B cell (primary cell): ENCODE measurements at regions of chr1 and their contacts with region 1.

Region 1: DNA sequence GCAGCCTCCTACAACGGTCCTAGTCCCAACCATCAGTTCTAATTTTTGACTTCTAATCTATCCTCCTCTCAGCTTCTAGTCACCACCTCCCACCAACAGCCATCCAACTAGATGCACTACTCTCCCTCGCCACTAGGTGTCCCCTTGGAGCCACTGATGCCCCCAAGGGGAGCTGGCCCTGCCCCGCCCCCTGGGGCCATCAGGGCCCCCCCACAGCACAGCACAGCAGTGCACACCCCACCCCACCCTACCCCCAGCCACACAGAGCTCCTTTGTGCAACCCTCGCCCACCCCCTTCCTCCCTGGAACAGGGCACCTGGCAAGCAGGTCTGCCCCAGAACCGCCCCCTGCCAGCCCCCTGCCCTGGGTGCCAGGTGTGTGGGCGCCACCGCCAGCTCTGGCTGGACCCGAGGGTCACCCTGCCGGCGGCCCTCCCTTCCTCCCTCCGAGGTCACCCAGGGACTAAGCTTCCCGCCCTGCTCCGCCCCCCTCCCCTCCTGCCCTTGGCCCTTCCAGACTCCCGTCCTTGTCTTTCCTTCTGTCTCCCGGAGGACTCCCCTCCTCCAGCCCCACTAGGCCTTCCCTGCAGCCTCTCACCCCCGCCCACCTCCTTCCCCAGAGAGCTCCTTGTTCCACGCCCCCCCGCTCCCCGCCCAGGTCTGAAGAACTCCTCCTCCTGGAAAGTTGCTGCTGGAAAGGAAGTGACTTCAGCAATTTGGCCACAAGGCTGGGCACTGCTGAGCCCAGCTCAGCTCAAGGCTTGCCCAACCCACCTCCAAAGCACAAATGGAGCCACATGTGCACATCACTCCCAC is 47.0 kb downstream of the AHDC1 start:
- DNase-seq: peak; percentile 81
- ATAC-seq: peak; percentile 89
- H3K4me3 ChIP-seq: no peak overlapping the region
- H3K4me3 Mint-ChIP-seq: peak overlapping the region; percentile 39
- H3K27ac ChIP-seq: peak overlapping the region in 1 of 2 donors; percentile 22
- H3K27ac Mint-ChIP-seq: peak overlapping the region; percentile 83
- H3K4me1 ChIP-seq: peaks cover 23 to 33% of the 10 kb centered on the region in 2 donors
- H3K4me1 Mint-ChIP-seq: peaks cover 44% of the 10 kb centered on the region
- H3K27me3 ChIP-seq: no peaks in the 10 kb centered on the region
- H3K27me3 Mint-ChIP-seq: no peaks in the 10 kb centered on the region
- CTCF ChIP-seq: peak; percentile 90

Region 2: GRCh38 chr1:27246194-27246593 is 310.8 kb before region 1 on chr1:
- CTCF ChIA-PET with region 1: no interaction called
- POLR2A ChIA-PET with region 1: no interaction called
- intact Hi-C with region 1: no loop called
- DNase-seq: no peak
- ATAC-seq: no peak
- H3K4me3 ChIP-seq: no peak overlapping the region
- H3K4me3 Mint-ChIP-seq: no peak overlapping the region
- H3K27ac ChIP-seq: no peak overlapping the region
- H3K27ac Mint-ChIP-seq: no peak overlapping the region
- H3K4me1 ChIP-seq: peaks cover 18 to 20% of the 10 kb centered on the region in 2 donors
- H3K4me1 Mint-ChIP-seq: peaks cover 29% of the 10 kb centered on the region
- H3K27me3 ChIP-seq: no peaks in the 10 kb centered on the region
- H3K27me3 Mint-ChIP-seq: no peaks in the 10 kb centered on the region
- CTCF ChIP-seq: no peak

Region 3: GRCh38 chr1:27402349-27402754 is 154.6 kb before region 1 on chr1:
- CTCF ChIA-PET with region 1: interaction called, 18 read pairs
- POLR2A ChIA-PET with region 1: interaction called, 5 read pairs
- intact Hi-C with region 1: no loop called
- DNase-seq: peak; percentile 54
- ATAC-seq: no peak
- H3K4me3 ChIP-seq: no peak overlapping the region
- H3K4me3 Mint-ChIP-seq: peak overlapping the region; percentile 72
- H3K27ac ChIP-seq: peak overlapping the region; percentile 49 to 79
- H3K27ac Mint-ChIP-seq: peak overlapping the region; percentile 89
- H3K4me1 ChIP-seq: peaks cover 41 to 59% of the 10 kb centered on the region in 2 donors
- H3K4me1 Mint-ChIP-seq: peaks cover 58% of the 10 kb centered on the region
- H3K27me3 ChIP-seq: no peaks in the 10 kb centered on the region
- H3K27me3 Mint-ChIP-seq: no peaks in the 10 kb centered on the region
- CTCF ChIP-seq: no peak

Region 4: GRCh38 chr1:27436204-27437159 is 120.5 kb before region 1 on chr1:
- CTCF ChIA-PET with region 1: interaction called, 14 read pairs
- POLR2A ChIA-PET with region 1: no interaction called
- intact Hi-C with region 1: no loop called
- DNase-seq: peak; percentile 50
- ATAC-seq: peak; percentile 55
- H3K4me3 ChIP-seq: peak overlapping the region; percentile 9 to 68 (median 34)
- H3K4me3 Mint-ChIP-seq: peak overlapping the region; percentile 84
- H3K27ac ChIP-seq: peak overlapping the region; percentile 71 to 83
- H3K27ac Mint-ChIP-seq: peak overlapping the region; percentile 86
- H3K4me1 ChIP-seq: peaks cover 76 to 78% of the 10 kb centered on the region in 2 donors
- H3K4me1 Mint-ChIP-seq: peaks cover 78% of the 10 kb centered on the region
- H3K27me3 ChIP-seq: no peaks in the 10 kb centered on the region
- H3K27me3 Mint-ChIP-seq: no peaks in the 10 kb centered on the region
- CTCF ChIP-seq: no peak

Region 5: GRCh38 chr1:27568300-27569087 is 11.5 kb after region 1 on chr1:
- CTCF ChIA-PET with region 1: interaction called, 82 read pairs
- POLR2A ChIA-PET with region 1: interaction called, 4 read pairs
- intact Hi-C with region 1: loop called (anchors 1 kb)
- DNase-seq: peak; percentile 95
- ATAC-seq: peak; percentile 92
- H3K4me3 ChIP-seq: peak overlapping the region in 4 of 5 experiments; percentile 25 to 69 (median 50)
- H3K4me3 Mint-ChIP-seq: peak overlapping the region; percentile 86
- H3K27ac ChIP-seq: peak overlapping the region; percentile 27 to 68
- H3K27ac Mint-ChIP-seq: peak overlapping the region; percentile 69
- H3K4me1 ChIP-seq: peaks cover 15 to 38% of the 10 kb centered on the region in 2 donors
- H3K4me1 Mint-ChIP-seq: peaks cover 40% of the 10 kb centered on the region
- H3K27me3 ChIP-seq: no peaks in the 10 kb centered on the region
- H3K27me3 Mint-ChIP-seq: no peaks in the 10 kb centered on the region
- CTCF ChIP-seq: peak; percentile 82

Region 6: GRCh38 chr1:27594562-27595510 is 37.8 kb after region 1 on chr1:
- CTCF ChIA-PET with region 1: interaction called, 27 read pairs
- POLR2A ChIA-PET with region 1: no interaction called
- intact Hi-C with region 1: no loop called
- DNase-seq: no peak
- ATAC-seq: no peak
- H3K4me3 ChIP-seq: no peak overlapping the region
- H3K4me3 Mint-ChIP-seq: no peak overlapping the region
- H3K27ac ChIP-seq: no peak overlapping the region
- H3K27ac Mint-ChIP-seq: no peak overlapping the region
- H3K4me1 ChIP-seq: peaks cover 41 to 65% of the 10 kb centered on the region in 2 donors
- H3K4me1 Mint-ChIP-seq: peaks cover 19% of the 10 kb centered on the region
- H3K27me3 ChIP-seq: no peaks in the 10 kb centered on the region
- H3K27me3 Mint-ChIP-seq: no peaks in the 10 kb centered on the region
- CTCF ChIP-seq: no peak